Activated CD8-positive, alpha-beta T cell treated with anti-CD3 and anti-CD28 coated beads for 36 hours (primary cell): ENCODE measurements at regions of chr5 and their contacts with region 1.

Region 1: DNA sequence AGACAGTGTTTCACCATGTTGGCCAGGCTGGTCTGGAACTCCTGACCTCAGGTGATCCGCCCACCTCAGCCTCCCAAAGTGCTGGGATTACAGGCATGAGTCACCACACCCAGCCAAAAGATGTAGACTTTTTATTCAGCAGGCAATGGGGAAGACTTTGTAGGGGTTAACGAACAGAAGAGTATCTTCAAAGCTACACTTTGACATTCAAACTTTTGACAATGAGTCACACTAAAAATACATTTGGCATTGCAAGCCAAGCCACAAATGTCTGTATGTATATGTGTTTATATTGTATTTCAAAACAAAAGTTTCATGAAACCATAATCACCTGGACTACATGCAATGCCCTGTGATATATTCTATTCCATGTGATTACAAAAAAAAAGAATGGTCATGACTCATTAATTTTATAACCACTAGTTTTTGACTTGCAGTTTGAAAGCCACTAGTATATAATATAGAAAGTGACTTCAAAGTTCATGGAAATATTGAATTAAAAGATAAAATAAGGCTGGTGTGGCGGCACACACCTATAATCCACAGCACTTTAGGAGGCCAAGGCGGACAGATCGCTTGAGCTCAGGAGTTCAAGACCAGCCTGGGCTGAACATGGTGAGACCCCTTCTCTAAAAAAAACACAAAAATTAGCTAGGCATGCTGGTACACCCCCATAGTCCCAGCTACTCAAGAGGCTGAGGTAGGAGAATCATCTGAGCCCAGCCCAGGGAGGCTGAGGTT is 8.3 kb downstream of the DIMT1 start:
- DNase-seq: peak; percentile 55
- ATAC-seq: peak; percentile 74
- H3K4me3 Mint-ChIP-seq: no peak overlapping the region
- H3K27ac Mint-ChIP-seq: peak overlapping the region; percentile 88
- H3K4me1 Mint-ChIP-seq: peaks cover 56% of the 10 kb centered on the region
- H3K27me3 Mint-ChIP-seq: no peaks in the 10 kb centered on the region
- CTCF ChIP-seq: no peak

Region 2: DNA sequence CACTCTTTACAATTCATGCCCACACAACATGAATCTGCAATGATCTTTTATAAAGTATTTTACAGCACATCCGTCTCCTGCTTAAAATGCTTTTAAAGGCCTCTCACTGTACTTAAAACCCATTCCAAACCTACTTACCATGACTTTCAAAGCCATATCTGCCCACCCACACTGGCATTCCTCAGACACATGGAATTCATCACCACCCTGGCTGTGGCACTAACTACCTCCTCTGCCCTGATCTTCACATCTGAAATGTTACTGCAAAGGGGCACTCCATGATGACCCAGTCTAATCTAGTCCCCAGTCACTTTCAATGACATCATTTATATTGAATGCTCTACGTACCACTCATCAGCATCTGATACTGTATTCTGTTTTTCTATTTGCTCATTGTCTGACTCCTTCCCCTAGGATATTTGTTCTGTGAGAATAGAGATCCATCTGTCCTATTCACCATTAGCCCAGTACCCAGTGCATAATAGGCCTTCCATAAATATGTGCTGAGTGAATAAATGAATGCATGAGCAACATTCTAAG is 282.6 kb before region 1 on chr5:
- CTCF ChIA-PET with region 1: no interaction called
- POLR2A ChIA-PET with region 1: no interaction called
- intact Hi-C with region 1: no loop called
- DNase-seq: no peak
- ATAC-seq: no peak
- H3K4me3 Mint-ChIP-seq: no peak overlapping the region
- H3K27ac Mint-ChIP-seq: no peak overlapping the region
- H3K4me1 Mint-ChIP-seq: no peaks in the 10 kb centered on the region
- H3K27me3 Mint-ChIP-seq: peaks cover 1% of the 10 kb centered on the region
- CTCF ChIP-seq: no peak

Region 3: GRCh38 chr5:62168506-62169281 is 226.7 kb before region 1 on chr5:
- CTCF ChIA-PET with region 1: no interaction called
- POLR2A ChIA-PET with region 1: no interaction called
- intact Hi-C with region 1: no loop called
- DNase-seq: no peak
- ATAC-seq: no peak
- H3K4me3 Mint-ChIP-seq: no peak overlapping the region
- H3K27ac Mint-ChIP-seq: no peak overlapping the region
- H3K4me1 Mint-ChIP-seq: no peaks in the 10 kb centered on the region
- H3K27me3 Mint-ChIP-seq: peaks cover 11% of the 10 kb centered on the region
- CTCF ChIP-seq: no peak

Region 4: DNA sequence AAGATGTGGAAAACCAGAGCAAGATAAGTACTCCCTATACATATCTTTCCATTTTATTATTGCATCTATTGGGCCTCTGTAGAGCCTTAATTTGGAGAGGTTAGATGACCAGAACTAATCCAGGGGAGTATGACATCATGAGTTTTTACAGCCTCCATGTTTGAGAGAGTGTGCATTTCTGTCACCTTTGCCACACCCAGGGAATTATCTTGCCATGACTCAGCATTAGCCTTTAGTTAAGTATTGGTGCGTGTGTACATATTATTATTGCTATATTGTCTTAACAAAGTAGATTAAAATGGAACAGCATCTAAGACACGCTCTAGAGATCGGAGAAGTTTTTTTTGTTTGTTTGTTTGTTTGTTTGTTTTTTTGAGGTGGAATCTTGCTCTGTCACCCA is 19.3 kb before region 1 on chr5:
- CTCF ChIA-PET with region 1: no interaction called
- POLR2A ChIA-PET with region 1: interaction called, 13 read pairs
- intact Hi-C with region 1: no loop called
- DNase-seq: no peak
- ATAC-seq: no peak
- H3K4me3 Mint-ChIP-seq: no peak overlapping the region
- H3K27ac Mint-ChIP-seq: peak overlapping the region; percentile 40
- H3K4me1 Mint-ChIP-seq: no peaks in the 10 kb centered on the region
- H3K27me3 Mint-ChIP-seq: no peaks in the 10 kb centered on the region
- CTCF ChIP-seq: no peak

Region 5: DNA sequence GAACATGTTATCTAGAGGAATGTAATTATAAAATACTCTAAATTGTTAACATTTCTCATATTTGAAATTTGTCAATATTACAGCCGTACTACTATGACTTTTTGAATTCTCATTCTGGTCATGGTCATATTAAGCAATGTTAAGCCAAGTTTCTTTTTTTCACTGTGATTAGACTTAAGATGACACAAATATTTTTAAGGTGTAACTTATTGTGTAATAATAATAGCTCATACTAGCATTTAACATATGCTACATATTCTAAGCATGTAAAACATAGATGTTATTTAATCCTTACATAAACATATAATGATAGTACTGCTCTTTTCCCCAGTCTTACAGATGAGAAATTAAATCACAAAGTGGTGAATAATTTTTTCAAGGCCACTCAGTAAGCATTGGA is 147.3 kb after region 1 on chr5:
- CTCF ChIA-PET with region 1: no interaction called
- POLR2A ChIA-PET with region 1: no interaction called
- intact Hi-C with region 1: no loop called
- DNase-seq: no peak
- ATAC-seq: no peak
- H3K4me3 Mint-ChIP-seq: no peak overlapping the region
- H3K27ac Mint-ChIP-seq: no peak overlapping the region
- H3K4me1 Mint-ChIP-seq: peaks cover 3% of the 10 kb centered on the region
- H3K27me3 Mint-ChIP-seq: no peaks in the 10 kb centered on the region
- CTCF ChIP-seq: no peak